ENCODE measurements at regions of chr13 and their contacts with region 1.

Region 1: DNA sequence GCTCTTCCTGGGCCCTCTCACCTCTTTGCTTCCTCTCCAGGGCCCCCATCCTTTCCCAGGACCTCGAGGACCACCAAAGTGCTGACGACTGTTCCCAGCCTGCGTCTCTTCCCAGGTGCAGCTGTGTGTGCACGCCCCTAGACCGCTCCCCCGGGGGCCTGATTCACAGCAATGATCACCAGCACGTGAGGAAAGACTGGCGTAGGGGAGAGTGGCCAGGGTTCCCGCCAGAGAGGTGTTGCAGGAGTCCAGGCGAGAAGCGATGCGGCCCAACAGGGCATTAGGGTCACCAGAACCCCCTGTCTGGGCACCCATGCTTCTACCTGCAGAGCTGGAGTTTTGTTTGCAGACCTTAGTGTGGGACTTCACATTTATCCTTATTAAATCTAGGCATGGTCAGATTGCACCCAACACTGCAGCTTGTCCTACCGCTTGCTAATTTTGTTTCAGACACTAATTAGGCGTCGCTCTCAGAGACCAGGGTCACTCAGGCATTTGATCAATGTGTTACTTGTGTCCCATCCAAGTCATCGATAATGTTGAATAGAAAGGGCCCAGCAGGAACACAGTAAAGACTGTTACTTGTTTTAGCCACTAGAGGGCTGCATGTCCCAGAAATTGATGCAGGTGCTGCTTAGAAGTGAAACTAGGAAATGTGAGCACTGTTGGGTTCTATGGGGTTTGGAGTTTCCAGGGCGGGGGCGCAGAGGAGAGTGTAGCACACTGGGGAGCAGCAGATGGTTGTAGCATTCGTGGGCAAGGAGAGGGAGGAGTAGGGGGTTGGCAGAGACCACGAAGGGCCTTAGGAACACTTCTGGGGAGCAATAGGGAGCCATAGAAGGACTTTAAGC is 53.2 kb downstream of the CDADC1 start:
- DNase-seq: peak; percentile 78
- H3K4me3 Mint-ChIP-seq: peak overlapping the region; percentile 68
- H3K27ac Mint-ChIP-seq: peak overlapping the region; percentile 61
- H3K4me1 Mint-ChIP-seq: peaks cover 11% of the 10 kb centered on the region
- H3K27me3 Mint-ChIP-seq: no peaks in the 10 kb centered on the region

Region 2: GRCh38 chr13:49356223-49356622 is 55.3 kb after region 1 on chr13:
- CTCF ChIA-PET with region 1: no interaction called
- intact Hi-C with region 1: no loop called
- DNase-seq: no peak
- H3K4me3 Mint-ChIP-seq: no peak overlapping the region
- H3K27ac Mint-ChIP-seq: no peak overlapping the region
- H3K4me1 Mint-ChIP-seq: no peaks in the 10 kb centered on the region
- H3K27me3 Mint-ChIP-seq: no peaks in the 10 kb centered on the region

Region 3: GRCh38 chr13:49436890-49437289 is 135.9 kb after region 1 on chr13:
- CTCF ChIA-PET with region 1: interaction called, 3 read pairs
- intact Hi-C with region 1: loop called (anchors 1 kb)
- DNase-seq: no peak
- H3K4me3 Mint-ChIP-seq: no peak overlapping the region
- H3K27ac Mint-ChIP-seq: no peak overlapping the region
- H3K4me1 Mint-ChIP-seq: peaks cover 9% of the 10 kb centered on the region
- H3K27me3 Mint-ChIP-seq: no peaks in the 10 kb centered on the region

Region 4: DNA sequence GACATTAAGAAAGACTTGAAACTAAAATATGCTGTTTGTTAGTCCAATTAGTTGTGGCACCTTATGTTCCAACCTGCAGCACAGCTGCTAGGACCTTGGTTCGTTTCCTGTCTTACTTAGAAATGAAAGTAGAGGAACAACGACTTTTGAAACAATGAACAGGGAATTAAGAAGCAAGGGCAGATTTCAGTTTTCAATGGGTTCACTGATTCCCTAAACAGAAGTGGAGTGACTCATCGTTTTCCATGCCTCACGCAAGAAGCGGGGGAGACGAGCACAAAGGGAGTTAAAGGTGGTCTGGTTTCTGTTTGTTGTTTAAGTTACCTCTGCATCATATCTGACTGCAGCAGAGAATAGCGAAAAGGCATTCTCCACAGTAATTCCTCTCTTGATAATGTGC is 239.6 kb after region 1 on chr13:
- CTCF ChIA-PET with region 1: no interaction called
- intact Hi-C with region 1: loop called (anchors 5 kb)
- DNase-seq: no peak
- H3K4me3 Mint-ChIP-seq: peak overlapping the region; percentile 16
- H3K27ac Mint-ChIP-seq: peak overlapping the region; percentile 38
- H3K4me1 Mint-ChIP-seq: peaks cover 21% of the 10 kb centered on the region
- H3K27me3 Mint-ChIP-seq: no peaks in the 10 kb centered on the region

Region 5: DNA sequence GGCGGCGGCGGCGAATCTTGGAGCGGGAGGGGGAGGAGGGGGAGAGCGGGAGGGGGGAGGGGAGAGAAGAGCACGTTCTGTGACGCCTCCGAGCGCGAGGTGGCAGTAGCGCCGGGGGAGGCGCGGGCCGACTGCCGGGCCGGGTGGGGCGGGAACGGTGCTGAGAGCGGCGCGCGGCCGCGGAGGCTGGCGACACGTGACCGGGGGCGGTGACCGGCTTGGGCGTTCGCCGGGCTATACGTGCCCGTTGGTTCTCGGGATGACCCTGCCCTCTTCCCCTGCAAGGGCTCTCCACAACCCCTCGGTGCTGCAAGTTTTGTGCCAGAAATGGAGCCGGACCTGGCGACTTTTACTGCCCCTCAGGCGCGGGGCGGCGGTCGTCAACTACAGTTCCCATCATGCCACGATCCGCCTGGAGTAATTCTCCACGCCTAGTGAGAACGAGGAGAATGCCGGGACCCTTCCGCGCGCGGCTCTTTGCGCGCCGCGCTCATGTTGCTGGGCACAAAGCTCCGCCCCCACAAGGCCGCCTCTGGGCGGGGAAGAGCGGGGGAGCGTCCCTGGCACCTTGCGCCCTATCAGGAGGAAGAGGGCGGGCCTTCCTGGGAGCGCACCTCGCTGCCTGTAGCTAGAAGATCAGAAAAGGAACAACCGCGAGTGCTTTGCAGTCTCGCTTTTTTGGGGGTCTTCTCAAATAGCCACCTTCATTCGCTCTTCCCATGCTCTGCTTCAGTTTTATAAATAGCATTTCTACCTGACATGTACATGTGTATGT is 491.8 kb after region 1 on chr13 and contains the start of gene KPNA3:
- CTCF ChIA-PET with region 1: no interaction called
- intact Hi-C with region 1: loop called (anchors 2 kb)
- DNase-seq: peak; percentile 96
- H3K4me3 Mint-ChIP-seq: peak within 1 kb of the TSS; percentile 92
- H3K27ac Mint-ChIP-seq: peak within 1 kb of the TSS; percentile 94
- H3K4me1 Mint-ChIP-seq: peaks cover 29% of the 10 kb centered on the region
- H3K27me3 Mint-ChIP-seq: peaks cover 4% of the 10 kb centered on the region
- total RNA-seq, gene KPNA3: 47.9 to 50.7 TPM